A673 (cell line): ENCODE measurements at regions of chr3 and their contacts with region 1.

Region 1: DNA sequence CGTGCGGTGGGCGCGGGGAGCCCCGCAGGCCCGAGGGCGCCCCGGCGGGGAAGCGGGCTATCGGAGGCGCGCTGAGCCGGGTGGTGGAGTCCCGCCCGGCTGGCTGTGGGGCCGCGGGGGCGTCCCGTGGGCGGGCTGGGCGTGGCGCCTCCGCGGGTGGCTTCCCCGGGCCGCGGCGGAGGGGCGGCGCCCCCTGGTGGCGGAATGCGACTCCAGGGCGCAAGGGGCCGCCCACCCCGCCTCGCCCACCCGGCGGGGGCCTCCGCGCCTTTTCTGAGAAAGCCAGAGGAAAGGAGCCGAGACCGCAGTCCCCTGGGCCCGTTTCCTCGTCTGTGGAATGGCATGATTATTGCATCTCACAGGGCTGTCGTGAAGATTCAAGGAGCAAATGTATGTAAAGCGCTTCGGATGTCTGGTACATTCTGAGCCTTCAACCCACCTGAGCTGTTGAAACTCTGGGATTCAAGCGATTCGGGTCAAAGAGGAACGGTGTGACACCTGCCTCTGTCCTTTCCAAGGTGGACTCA is 31.9 kb upstream of the RAB6B start:
- DNase-seq: peak; percentile 69
- H3K4me3 ChIP-seq: peak overlapping the region; percentile 57
- H3K27ac ChIP-seq: no peak overlapping the region
- H3K4me1 ChIP-seq: peaks cover 11% of the 10 kb centered on the region
- H3K27me3 ChIP-seq: no peaks in the 10 kb centered on the region
- CTCF ChIP-seq: peak; percentile 58

Region 2: GRCh38 chr3:132722164-132723024 is 1205.2 kb before region 1 on chr3 and contains the start of gene NPHP3:
- CTCF ChIA-PET with region 1: no interaction called
- POLR2A ChIA-PET with region 1: no interaction called
- intact Hi-C with region 1: loop called (anchors 5 kb)
- DNase-seq: peak; percentile 94
- H3K4me3 ChIP-seq: peak within 1 kb of the TSS; percentile 97
- H3K27ac ChIP-seq: peak within 1 kb of the TSS; percentile 73
- H3K4me1 ChIP-seq: no peaks in the 10 kb centered on the region
- H3K27me3 ChIP-seq: no peaks in the 10 kb centered on the region
- CTCF ChIP-seq: no peak
- total RNA-seq, gene NPHP3: 5.8 and 9.0 TPM in 2 replicates

Region 3: DNA sequence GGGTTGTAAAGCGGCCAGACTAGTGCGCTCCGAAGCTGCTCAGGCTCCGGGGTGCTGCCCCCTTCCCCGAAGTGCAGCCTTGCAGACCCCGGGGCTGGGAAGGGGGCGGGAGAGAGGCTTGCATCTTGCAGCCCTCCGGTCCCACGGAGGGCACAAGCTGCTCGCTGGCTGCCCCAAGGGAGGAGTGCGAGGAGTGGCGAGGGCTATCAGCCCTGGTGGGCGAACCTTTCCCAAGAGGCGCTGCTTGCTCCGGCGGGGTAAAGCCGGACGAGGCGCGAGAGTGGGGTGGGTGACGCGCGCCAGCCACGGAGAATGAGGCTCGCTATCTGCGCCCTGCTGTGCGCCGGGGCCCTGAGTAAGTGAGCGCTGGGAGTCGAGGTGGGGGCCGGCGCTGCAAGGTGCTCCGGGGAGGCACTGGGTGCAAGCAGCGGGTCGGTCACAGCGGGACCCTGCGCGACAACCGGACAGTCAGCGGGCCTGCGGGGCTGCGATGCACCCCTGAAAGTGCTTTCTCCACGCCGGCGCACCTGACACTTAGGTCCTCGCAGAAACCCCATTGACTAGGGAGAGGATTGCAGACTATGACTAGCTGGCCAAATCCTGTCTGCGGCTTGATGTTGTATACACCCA is 253.2 kb before region 1 on chr3:
- CTCF ChIA-PET with region 1: interaction called, 13 read pairs
- POLR2A ChIA-PET with region 1: no interaction called
- intact Hi-C with region 1: no loop called
- DNase-seq: peak; percentile 15
- H3K4me3 ChIP-seq: peak overlapping the region; percentile 26
- H3K27ac ChIP-seq: no peak overlapping the region
- H3K4me1 ChIP-seq: no peaks in the 10 kb centered on the region
- H3K27me3 ChIP-seq: peaks cover 64% of the 10 kb centered on the region
- CTCF ChIP-seq: no peak

Region 4: GRCh38 chr3:133865136-133865855 is 62.3 kb before region 1 on chr3:
- CTCF ChIA-PET with region 1: no interaction called
- POLR2A ChIA-PET with region 1: no interaction called
- intact Hi-C with region 1: no loop called
- DNase-seq: no peak
- H3K4me3 ChIP-seq: no peak overlapping the region
- H3K27ac ChIP-seq: no peak overlapping the region
- H3K4me1 ChIP-seq: no peaks in the 10 kb centered on the region
- H3K27me3 ChIP-seq: no peaks in the 10 kb centered on the region
- CTCF ChIP-seq: no peak

Region 5: DNA sequence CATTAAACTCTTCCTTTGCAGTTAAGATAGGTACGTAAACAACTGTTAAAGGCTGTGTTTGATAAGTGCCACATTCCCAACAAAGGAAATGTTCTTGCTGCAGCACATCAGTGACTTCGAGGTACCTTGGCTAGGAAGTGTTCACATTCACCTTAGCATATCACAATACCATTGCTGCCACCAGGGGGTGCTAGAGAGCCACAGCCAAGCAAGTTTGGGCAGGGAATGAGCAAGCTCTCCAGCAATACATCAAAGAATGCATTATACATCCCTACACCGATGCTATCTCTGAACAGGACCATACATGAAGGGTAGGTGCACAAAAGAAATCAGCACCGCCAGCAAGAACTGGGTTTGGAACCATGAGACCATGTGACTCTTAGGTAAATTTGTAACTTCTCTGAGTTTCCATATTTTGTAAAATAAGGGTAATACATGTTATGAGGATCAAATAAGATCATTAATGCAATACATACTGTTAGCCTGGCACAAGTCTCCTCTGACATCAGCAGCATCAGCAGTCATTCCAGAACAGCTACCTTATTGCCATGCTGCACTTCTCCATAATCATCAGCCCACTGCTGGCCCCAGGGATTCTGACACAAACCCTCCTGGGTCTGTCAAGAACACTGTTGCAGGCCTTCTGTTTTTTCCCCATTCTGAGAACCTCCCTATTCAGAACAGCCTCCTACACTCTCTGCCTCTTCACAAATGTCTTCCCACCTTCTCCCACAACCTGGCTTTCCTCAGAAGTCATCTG is 285.5 kb after region 1 on chr3:
- CTCF ChIA-PET with region 1: interaction called, 7 read pairs
- POLR2A ChIA-PET with region 1: no interaction called
- intact Hi-C with region 1: loop called (anchors 1 kb)
- DNase-seq: peak; percentile 86
- H3K4me3 ChIP-seq: no peak overlapping the region
- H3K27ac ChIP-seq: no peak overlapping the region
- H3K4me1 ChIP-seq: no peaks in the 10 kb centered on the region
- H3K27me3 ChIP-seq: no peaks in the 10 kb centered on the region
- CTCF ChIP-seq: peak; percentile 97

Region 6: DNA sequence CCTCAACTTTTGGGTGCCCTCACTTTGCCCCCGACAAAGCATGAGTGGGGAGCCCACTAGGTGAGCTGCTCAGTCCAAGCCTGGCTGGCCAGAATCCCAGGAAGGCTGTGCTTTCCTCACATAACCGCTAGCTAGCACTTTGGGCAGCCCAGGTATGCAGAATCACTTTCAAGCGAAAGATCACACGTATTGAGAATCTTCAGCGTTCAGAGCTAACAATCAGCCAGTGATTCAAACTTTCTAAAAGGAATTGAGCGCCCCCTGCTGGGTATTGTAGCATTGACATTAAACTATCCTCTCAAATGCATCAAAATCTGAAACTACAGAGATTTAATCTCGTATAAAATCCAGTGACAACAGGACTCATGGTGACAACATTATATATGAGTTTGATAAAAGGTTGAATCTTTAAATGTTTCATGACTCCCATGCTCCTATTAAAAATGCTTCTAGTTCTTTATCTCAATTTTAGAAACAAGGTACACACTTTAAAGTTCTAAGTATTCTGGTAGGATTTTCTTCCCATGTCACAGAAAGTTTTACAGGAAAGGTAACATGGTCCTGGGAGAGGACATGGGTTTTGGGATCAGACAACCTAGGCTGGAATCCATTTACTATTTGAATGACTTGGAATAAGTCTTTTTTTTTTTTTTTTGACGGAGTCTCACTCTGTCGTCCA is 546.4 kb after region 1 on chr3:
- CTCF ChIA-PET with region 1: no interaction called
- POLR2A ChIA-PET with region 1: no interaction called
- intact Hi-C with region 1: loop called (anchors 2 kb)
- DNase-seq: peak; percentile 81
- H3K4me3 ChIP-seq: no peak overlapping the region
- H3K27ac ChIP-seq: no peak overlapping the region
- H3K4me1 ChIP-seq: no peaks in the 10 kb centered on the region
- H3K27me3 ChIP-seq: no peaks in the 10 kb centered on the region
- CTCF ChIP-seq: peak; percentile 81